PC-3 (cell line): ENCODE measurements at regions of chr6 and their contacts with region 1.

Region 1: GRCh38 chr6:53112404-53112803 is 36.2 kb downstream of the GCM1 start:
- DNase-seq: peak; percentile 97
- ATAC-seq: peak; percentile 93
- H3K4me3 ChIP-seq: peak overlapping the region; percentile 52; the same call in 1 of the 2 replicates
- H3K27ac ChIP-seq: peak overlapping the region; percentile 96
- H3K4me1 ChIP-seq: peaks cover 38% of the 10 kb centered on the region
- H3K27me3 ChIP-seq: no peaks in the 10 kb centered on the region
- CTCF ChIP-seq: no peak

Region 2: DNA sequence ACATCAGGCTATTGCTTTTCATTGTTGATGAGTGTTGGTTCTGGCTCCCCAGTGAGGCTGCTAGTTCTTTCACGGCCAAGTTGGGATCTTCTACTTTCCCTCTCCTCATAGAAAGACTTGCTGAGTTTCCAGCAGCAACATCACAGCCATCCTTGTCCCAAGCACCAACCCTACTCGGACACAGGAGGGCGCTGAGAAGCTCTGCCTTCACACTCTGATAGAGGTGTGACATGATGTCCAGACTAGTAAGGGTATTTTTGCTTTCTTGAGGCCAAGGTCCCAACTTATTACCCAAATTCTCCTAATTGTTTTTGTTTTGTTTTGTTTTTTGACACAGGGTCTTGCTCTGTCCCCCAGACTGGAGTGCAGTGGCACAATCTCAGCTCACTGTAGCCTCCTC is 39.3 kb after region 1 on chr6:
- CTCF ChIA-PET with region 1: no interaction called
- POLR2A ChIA-PET with region 1: no interaction called
- intact Hi-C with region 1: no loop called
- DNase-seq: peak; percentile 43
- ATAC-seq: no peak
- H3K4me3 ChIP-seq: no peak overlapping the region
- H3K27ac ChIP-seq: no peak overlapping the region
- H3K4me1 ChIP-seq: no peaks in the 10 kb centered on the region
- H3K27me3 ChIP-seq: no peaks in the 10 kb centered on the region
- CTCF ChIP-seq: peak; percentile 56

Region 3: DNA sequence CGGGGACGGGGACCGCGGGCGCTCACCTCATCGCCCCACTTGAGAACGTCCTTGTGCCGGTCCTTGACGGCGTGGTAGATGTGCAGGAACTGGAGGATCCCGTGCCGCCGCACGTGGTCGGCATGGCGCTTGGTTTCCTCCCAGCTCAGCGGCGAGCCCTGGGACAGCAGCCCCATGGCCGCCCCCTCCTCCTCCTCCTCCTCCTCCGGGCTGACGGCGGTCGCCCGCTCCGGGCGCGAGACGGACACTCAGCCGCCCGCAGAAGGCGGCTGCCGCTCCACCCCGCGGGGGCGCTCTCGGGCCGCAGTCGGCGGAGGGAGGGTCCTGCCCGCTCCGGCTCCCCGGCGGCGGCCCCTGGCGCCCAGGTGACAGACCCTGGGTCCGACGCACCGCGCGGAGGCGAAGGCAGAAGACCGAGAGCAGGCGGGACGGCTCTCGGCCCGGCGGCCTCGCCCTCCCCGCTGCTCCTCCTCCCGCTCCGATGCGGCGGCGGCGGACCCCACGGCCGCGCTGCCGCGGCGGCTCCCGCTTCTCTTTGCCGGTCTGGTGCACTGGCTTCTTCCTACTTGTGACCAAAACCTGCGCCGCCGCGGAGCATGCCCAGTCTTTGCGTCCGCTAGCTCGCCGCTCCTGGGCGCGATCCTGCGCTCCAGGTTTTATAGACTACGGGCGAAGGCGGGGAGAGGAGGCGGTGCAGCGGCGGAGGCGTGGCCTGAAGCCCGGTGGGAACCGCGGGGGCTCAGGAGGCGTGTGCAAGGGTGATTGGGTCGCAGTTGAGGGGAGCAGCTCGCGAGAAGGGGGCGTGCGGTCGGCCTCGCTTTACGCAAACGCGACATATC is 432.3 kb after region 1 on chr6 and contains the start of gene GCLC:
- CTCF ChIA-PET with region 1: no interaction called
- POLR2A ChIA-PET with region 1: no interaction called
- intact Hi-C with region 1: loop called (anchors 5 kb)
- DNase-seq: peak; percentile 96
- ATAC-seq: peak; percentile 55
- H3K4me3 ChIP-seq: peak within 1 kb of the TSS; percentile 92
- H3K27ac ChIP-seq: peak within 1 kb of the TSS; percentile 56
- H3K4me1 ChIP-seq: peaks cover 42% of the 10 kb centered on the region
- H3K27me3 ChIP-seq: no peaks in the 10 kb centered on the region
- CTCF ChIP-seq: peak; percentile 65
- total RNA-seq, gene GCLC: 50.1 and 54.7 TPM in 2 replicates